Cardiac septum (tissue), 1 donor: ENCODE measurements at regions of chr3 and their contacts with region 1.

Region 1: DNA sequence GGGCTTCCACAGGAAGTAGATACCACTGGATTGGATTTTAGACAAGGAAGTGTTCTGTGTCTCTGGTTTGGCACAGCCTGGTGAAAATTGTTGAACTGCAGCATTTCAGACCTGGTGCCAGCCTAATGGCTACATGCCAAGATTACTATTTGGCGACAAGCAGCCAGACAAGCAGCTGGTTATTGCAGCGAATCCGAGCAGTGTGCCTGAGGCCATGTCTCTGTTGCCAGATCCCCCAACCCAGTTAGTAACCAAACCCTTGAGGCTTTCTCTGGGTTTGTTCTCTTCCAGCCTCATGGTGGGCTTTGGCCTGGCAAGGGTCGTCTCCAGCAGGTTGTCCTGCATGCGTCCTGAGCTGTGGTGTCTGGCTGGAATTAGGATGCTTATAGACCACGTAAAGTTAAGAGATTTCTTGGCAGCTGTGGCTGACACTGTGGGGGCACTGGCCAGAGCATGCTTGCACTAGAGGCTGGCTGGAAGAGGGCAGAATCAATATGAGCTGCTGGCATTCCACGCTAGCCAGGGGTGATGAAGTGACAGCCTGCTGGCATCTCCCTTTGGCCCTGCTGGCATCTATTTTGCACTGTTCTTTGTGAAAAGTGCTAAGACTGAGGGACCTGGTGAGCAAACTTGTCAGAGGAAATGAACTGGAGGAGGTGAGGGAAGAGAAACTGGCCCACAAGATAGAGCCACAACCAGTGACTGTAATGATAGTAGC is 172.6 kb downstream of the RBMS3 start:
- DNase-seq: peak; percentile 74

Region 2: GRCh38 chr3:29503958-29504357 is 50.5 kb after region 1 on chr3:
- intact Hi-C with region 1: loop called (anchors 5 kb)
- DNase-seq: no peak

Region 3: GRCh38 chr3:29649815-29650547 is 196.5 kb after region 1 on chr3:
- intact Hi-C with region 1: no loop called
- DNase-seq: no peak